ENCODE measurements at regions of chr5 and their contacts with region 1.

Region 1: GRCh38 chr5:40755407-40756365 is at the start of gene TTC33:
- DNase-seq: peak; percentile 83 to 89 (median 88)
- H3K4me3 ChIP-seq: peak within 1 kb of the TSS; percentile 82 to 94 (median 92)
- H3K4me3 Mint-ChIP-seq: no peak within 1 kb of the TSS
- H3K27ac ChIP-seq: peak within 1 kb of the TSS; percentile 26 to 75
- H3K27ac Mint-ChIP-seq: no peak within 1 kb of the TSS
- H3K4me1 ChIP-seq: peaks cover 12 to 16% of the 10 kb centered on the region in 2 donors
- H3K4me1 Mint-ChIP-seq: no peaks in the 10 kb centered on the region
- H3K27me3 ChIP-seq: no peaks in the 10 kb centered on the region
- H3K27me3 Mint-ChIP-seq: peaks cover 0 to 2% (median 0%) of the 10 kb centered on the region in 3 donors
- CTCF ChIP-seq: peak; percentile 68
- polyA plus RNA-seq, gene TTC33: 1.5 to 11.7 (median 9.4) TPM

Region 2: GRCh38 chr5:40834849-40835787 is 79.4 kb after region 1 on chr5 and contains the start of gene RPL37:
- intact Hi-C with region 1: loop called in 1 of 2 experiments (anchors 10 kb)
- DNase-seq: peak; percentile 93 to 96 (median 95)
- H3K4me3 ChIP-seq: peak within 1 kb of the TSS; percentile 86 to 99 (median 89)
- H3K4me3 Mint-ChIP-seq: peak within 1 kb of the TSS; percentile 95 to 99
- H3K27ac ChIP-seq: peak within 1 kb of the TSS; percentile 92 to 96
- H3K27ac Mint-ChIP-seq: peak within 1 kb of the TSS; percentile 96 to 99 (median 97)
- H3K4me1 ChIP-seq: peaks cover 38 to 45% of the 10 kb centered on the region in 2 donors
- H3K4me1 Mint-ChIP-seq: peaks cover 44% of the 10 kb centered on the region
- H3K27me3 ChIP-seq: no peaks in the 10 kb centered on the region
- H3K27me3 Mint-ChIP-seq: peaks cover 0 to 2% (median 0%) of the 10 kb centered on the region in 3 donors
- CTCF ChIP-seq: no peak
- polyA plus RNA-seq, gene RPL37: 87.9 to 813 (median 738) TPM

Measured in CD14-positive monocyte (primary cell).